BJ (cell line): ENCODE measurements at regions of chr4 and their contacts with region 1.

Region 1: DNA sequence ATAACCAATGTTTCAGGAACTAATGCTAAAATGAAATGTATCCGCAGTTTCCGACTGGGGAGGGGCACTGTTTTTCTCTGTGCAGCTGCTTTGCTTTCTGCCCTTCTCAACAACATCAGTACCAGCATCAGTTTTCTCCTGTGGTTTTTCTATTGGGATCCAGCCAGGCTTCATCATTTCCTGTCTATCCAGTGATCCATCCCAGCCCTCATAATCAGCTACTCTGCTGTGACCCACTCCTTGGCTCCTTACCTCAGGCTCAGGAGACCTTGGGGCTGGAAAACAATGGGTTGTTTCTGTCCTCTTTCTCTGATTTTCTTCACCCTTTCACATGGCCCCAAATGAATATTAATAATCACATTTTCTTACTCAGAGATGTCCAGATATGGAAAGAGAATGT is 222.2 kb upstream of the DKK2 start:
- DNase-seq: no peak
- H3K4me3 ChIP-seq: no peak overlapping the region
- H3K27me3 ChIP-seq: no peaks in the 10 kb centered on the region
- CTCF ChIP-seq: no peak

Region 2: DNA sequence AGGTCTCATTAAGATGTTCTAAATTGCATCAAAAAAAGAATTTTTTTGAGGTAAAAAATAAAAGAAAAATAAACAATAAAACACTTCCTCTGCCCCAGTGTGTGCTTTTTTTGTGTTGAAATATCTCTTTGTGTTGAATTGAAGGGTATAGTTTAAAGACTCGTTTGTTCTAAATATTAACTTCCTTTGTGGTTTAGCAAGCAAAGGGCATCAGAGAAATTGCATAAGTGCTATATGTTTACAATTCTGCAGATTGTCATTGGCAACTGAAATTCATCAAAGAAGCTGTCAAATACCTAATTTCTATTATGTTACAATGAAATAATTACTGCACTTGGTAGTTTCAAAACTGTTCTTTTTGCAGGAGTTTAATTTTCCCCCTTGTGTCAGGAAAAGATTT is 482.7 kb before region 1 on chr4:
- CTCF ChIA-PET with region 1: no interaction called
- POLR2A ChIA-PET with region 1: no interaction called
- DNase-seq: no peak
- H3K4me3 ChIP-seq: no peak overlapping the region
- H3K27me3 ChIP-seq: no peaks in the 10 kb centered on the region
- CTCF ChIP-seq: no peak

Region 3: DNA sequence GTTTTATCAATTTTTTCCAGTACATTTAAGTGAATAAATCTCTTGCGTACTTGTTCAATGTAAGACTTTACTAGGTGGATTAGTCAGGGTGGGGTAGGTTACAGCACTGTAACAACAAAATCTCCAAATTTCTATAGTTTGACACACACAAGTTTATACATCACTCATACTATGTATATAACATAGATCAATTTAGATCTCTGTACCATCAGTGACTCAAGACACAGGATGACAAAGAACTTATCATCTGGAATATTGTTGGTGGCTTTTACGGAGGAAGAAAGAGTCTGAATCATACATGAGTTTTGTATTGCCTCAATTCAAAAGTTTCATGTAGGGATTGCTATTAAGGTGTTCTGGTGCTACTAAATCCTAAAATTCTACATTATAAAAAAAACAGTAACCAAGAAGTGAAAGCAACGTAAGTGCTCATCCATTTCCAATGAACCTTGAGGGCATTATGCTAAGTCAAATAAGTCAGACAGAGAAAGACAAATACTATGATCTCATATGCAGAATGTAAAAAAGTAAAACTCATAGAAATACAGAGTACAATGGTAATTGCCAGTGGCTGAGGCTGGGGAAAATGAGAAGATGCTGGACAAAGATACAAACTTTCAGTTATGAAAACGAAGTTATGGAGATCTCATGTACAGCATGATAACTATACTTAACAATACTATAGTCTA is 124.2 kb before region 1 on chr4:
- CTCF ChIA-PET with region 1: no interaction called
- POLR2A ChIA-PET with region 1: no interaction called
- DNase-seq: no peak
- H3K4me3 ChIP-seq: no peak overlapping the region
- H3K27me3 ChIP-seq: no peaks in the 10 kb centered on the region
- CTCF ChIP-seq: no peak

Region 4: GRCh38 chr4:107220976-107221375 is 37.4 kb before region 1 on chr4:
- CTCF ChIA-PET with region 1: no interaction called
- POLR2A ChIA-PET with region 1: interaction called, 27 read pairs
- DNase-seq: no peak
- H3K4me3 ChIP-seq: no peak overlapping the region
- H3K27me3 ChIP-seq: no peaks in the 10 kb centered on the region
- CTCF ChIP-seq: no peak